Activated CD4-positive, alpha-beta memory T cell treated with anti-CD3 and anti-CD28 coated beads, Interleukin-2, amount 10 ng/mL, durations not matched to agents 7 days and 5 days (primary cell): ENCODE measurements at regions of chr12 and their contacts with region 1.

Region 1: GRCh38 chr12:52980693-52981423 is 25.4 kb upstream of the EIF4B start:
- DNase-seq: peak; percentile 85
- H3K4me3 Mint-ChIP-seq: no peak overlapping the region
- H3K27ac Mint-ChIP-seq: no peak overlapping the region
- H3K4me1 Mint-ChIP-seq: peaks cover 2% of the 10 kb centered on the region
- H3K27me3 Mint-ChIP-seq: peaks cover 38% of the 10 kb centered on the region

Region 2: DNA sequence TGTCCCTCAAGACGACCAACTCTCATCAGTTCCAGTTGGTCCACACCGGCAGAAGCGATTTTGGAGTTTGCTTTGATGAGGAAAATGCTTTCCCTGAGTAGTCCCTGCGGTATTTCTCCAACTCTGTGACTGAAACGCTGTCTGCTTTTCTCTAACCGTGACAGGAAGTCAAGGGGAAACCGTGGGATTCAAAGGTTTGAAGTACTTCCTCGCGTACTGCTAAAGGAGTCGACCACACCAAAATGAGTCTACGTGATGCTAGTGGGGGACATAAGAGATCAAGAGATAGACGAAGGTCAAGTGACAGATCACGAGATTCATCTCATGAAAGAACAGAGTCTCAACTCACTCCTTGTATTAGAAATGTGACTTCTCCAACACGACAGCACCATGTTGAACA is 232.3 kb before region 1 on chr12:
- CTCF ChIA-PET with region 1: no interaction called
- POLR2A ChIA-PET with region 1: no interaction called
- DNase-seq: no peak
- H3K4me3 Mint-ChIP-seq: no peak overlapping the region
- H3K27ac Mint-ChIP-seq: no peak overlapping the region
- H3K4me1 Mint-ChIP-seq: peaks cover 4% of the 10 kb centered on the region
- H3K27me3 Mint-ChIP-seq: peaks cover 11% of the 10 kb centered on the region

Region 3: GRCh38 chr12:52870351-52871290 is 110.2 kb before region 1 on chr12:
- CTCF ChIA-PET with region 1: interaction called, 10 read pairs
- POLR2A ChIA-PET with region 1: no interaction called
- DNase-seq: peak; percentile 78
- H3K4me3 Mint-ChIP-seq: no peak overlapping the region
- H3K27ac Mint-ChIP-seq: no peak overlapping the region
- H3K4me1 Mint-ChIP-seq: peaks cover 43% of the 10 kb centered on the region
- H3K27me3 Mint-ChIP-seq: no peaks in the 10 kb centered on the region

Region 4: DNA sequence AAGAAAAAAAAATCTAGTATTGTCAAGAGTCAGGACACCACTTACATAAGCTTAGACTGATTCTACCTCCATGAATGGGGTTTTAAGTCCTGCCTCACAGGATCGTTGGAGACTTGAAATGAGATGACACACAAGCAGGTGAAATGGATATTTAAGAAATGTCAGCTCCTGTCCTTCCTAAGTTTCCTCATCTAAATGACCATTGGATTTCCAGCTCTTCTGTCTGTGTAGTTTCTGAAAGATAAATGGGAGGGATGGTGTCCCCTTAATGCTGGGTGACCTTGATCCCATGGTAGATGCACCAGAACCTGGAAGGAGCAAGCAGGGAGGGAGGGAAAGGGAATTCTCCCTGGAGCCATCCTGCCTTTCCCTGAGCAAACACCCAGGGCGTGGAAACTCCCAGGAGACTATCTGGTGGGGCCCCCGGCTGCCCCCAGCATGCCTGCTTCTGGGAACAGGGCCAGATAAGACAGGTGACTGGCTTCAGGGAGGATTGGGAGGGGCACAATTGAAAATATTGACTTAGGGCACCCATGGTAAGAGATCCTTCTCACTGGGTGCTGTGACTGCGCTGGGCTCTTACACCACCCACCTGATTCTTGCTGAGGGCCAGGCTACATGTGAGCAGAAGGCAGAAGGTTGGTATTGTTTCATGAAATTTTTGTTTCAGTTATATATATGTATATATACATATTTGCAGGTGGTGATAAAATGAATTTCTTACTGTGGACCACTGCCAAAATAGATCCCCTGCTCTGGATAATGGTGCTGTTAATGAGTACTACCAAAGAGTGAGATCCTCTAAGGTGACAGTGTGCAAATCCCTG is 85.6 kb before region 1 on chr12:
- CTCF ChIA-PET with region 1: interaction called, 13 read pairs
- POLR2A ChIA-PET with region 1: no interaction called
- DNase-seq: no peak
- H3K4me3 Mint-ChIP-seq: no peak overlapping the region
- H3K27ac Mint-ChIP-seq: no peak overlapping the region
- H3K4me1 Mint-ChIP-seq: no peaks in the 10 kb centered on the region
- H3K27me3 Mint-ChIP-seq: peaks cover 5% of the 10 kb centered on the region

Region 5: DNA sequence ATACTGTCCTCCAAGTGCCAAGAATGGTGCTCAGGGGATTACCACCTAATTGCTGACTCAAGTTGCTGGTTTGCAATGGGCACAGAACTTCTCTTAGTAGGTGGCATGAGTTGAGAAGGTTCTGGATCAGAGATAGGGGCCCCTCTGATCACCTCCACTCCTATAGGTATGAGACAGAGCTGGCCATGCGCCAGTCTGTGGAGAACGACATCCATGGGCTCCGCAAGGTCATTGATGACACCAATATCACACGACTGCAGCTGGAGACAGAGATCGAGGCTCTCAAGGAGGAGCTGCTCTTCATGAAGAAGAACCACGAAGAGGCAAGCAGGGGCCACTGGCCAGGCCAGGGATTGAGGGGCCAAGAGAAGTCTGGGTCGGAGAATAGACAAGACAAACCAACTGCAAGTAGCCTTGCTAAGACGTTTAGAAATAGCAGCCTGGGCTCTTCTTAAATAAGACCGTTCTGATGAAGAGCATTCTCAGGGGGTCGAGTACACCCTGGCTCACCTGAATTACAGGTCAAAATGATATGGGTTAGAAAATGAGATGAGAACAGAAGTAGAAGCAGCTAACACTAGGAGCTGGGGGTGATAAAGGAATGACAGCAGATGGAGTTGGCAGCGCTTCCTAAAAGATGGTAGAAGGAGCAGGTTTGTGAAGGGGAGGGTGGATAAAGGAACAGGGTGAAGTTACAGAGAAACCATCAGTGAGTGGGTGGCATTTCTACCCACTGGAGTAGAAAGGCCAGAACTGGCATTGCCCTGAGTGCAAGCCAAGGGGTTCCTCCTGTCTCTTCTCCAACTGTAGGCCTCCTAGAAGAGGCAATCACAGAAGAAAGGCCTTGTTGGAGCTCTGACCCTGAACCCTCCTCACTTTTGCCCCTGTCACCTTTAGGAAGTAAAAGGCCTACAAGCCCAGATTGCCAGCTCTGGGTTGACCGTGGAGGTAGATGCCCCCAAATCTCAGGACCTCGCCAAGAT is 30.0 kb before region 1 on chr12:
- CTCF ChIA-PET with region 1: no interaction called
- POLR2A ChIA-PET with region 1: no interaction called
- DNase-seq: no peak
- H3K4me3 Mint-ChIP-seq: no peak overlapping the region
- H3K27ac Mint-ChIP-seq: no peak overlapping the region
- H3K4me1 Mint-ChIP-seq: peaks cover 2% of the 10 kb centered on the region
- H3K27me3 Mint-ChIP-seq: peaks cover 8% of the 10 kb centered on the region

Region 6: GRCh38 chr12:52992699-52993557 is 12.1 kb after region 1 on chr12:
- CTCF ChIA-PET with region 1: interaction called, 21 read pairs
- POLR2A ChIA-PET with region 1: no interaction called
- DNase-seq: no peak
- H3K4me3 Mint-ChIP-seq: no peak overlapping the region
- H3K27ac Mint-ChIP-seq: no peak overlapping the region
- H3K4me1 Mint-ChIP-seq: no peaks in the 10 kb centered on the region
- H3K27me3 Mint-ChIP-seq: peaks cover 4% of the 10 kb centered on the region

Region 7: GRCh38 chr12:53005986-53006809 is 25.3 kb after region 1 on chr12 and contains the start of gene EIF4B:
- CTCF ChIA-PET with region 1: interaction called, 17 read pairs
- POLR2A ChIA-PET with region 1: interaction called, 3 read pairs
- DNase-seq: peak; percentile 100
- H3K4me3 Mint-ChIP-seq: peak within 1 kb of the TSS; percentile 97
- H3K27ac Mint-ChIP-seq: peak within 1 kb of the TSS; percentile 96
- H3K4me1 Mint-ChIP-seq: peaks cover 49% of the 10 kb centered on the region
- H3K27me3 Mint-ChIP-seq: peaks cover under 1% of the 10 kb centered on the region
- total RNA-seq, gene EIF4B: 303 to 311 TPM